ENCODE measurements at regions of chrX and their contacts with region 1.

Region 1: GRCh38 chrX:7828594-7828993 is 14.4 kb upstream of the VCX start:
- DNase-seq: no peak
- H3K4me3 ChIP-seq: no peak overlapping the region
- H3K27ac ChIP-seq: no peak overlapping the region
- H3K4me1 ChIP-seq: no peaks in the 10 kb centered on the region
- H3K27me3 ChIP-seq: no peaks in the 10 kb centered on the region
- CTCF ChIP-seq: peak; percentile 30

Region 2: GRCh38 chrX:7606039-7606652 is 222.4 kb before region 1 on chrX:
- intact Hi-C with region 1: no loop called
- DNase-seq: no peak
- H3K4me3 ChIP-seq: no peak overlapping the region
- H3K27ac ChIP-seq: no peak overlapping the region
- H3K4me1 ChIP-seq: no peaks in the 10 kb centered on the region
- H3K27me3 ChIP-seq: no peaks in the 10 kb centered on the region
- CTCF ChIP-seq: no peak

Region 3: DNA sequence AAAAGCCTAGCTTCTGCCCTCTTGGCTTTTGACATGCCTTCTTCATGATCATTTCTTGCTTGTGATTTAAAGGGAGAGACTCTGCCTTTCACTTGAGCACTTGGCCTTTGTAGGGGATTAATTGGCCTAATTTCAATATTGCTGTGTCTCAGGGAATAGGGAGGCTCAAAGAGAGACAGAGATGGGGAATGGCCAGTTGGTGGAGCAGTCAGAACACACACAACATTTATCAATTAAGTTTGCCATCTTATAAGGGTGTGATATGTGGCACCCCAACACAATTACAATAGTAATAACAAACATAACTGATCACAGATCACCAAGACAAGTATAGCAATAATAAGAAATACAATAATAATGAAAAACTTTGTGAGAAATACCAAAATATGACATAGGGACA is 108.1 kb before region 1 on chrX:
- intact Hi-C with region 1: loop called (anchors 10 kb)
- DNase-seq: no peak
- H3K4me3 ChIP-seq: no peak overlapping the region
- H3K27ac ChIP-seq: no peak overlapping the region
- H3K4me1 ChIP-seq: no peaks in the 10 kb centered on the region
- H3K27me3 ChIP-seq: no peaks in the 10 kb centered on the region
- CTCF ChIP-seq: no peak